Heart right ventricle (tissue), 16 donors: ENCODE measurements at regions of chr7 and their contacts with region 1.

Region 1: DNA sequence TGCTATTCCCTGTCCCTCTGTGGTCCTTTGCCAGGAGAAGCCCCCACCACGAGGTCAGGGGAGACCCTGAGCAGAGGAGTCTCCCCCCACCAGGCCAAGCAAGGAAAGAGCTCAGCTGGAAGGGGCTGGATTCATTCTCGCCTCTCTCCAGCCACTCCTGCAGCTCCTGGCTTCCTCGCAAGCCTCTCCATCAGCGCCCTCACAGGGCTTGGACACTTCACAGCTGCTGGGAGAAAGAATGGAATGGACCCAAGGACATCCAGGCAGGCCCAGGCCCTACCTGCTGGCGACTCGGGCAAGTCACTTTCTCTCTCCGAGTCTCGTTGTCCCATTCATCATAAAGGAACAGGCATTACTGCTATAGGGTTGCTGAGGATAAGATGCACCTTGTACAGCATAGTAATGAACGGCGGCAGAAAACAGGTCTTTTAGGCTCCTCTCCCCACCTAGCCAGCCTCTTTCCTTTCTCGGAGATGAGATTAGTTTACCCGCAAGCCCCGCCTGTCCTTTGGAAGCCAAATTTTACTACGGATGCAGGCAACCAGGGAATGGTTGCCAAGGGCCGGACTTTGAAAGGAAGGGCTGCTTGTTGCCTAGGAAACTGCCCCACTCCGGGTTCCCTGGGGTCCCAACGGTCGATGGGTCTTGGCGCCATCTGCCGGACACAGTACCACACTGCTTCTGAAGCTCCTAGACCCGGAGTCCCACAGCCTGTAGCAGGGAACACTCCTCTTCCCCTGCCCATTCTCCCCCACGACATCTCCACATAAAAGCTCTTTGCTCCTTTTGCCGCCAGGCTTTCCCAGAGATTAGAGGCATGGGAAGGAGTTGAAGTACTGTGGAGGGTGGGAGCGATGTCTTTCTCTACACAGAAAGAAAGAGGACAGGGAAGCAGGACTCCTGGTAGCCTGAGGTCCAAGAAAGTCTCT is 22.3 kb downstream of the IMPDH1 start:
- DNase-seq: peak; percentile 83 to 85
- ATAC-seq: peak; percentile 79 to 93 (median 87)
- H3K4me3 ChIP-seq: peak overlapping the region in 2 of 10 donors; percentile 16 to 20
- H3K27ac ChIP-seq: no peak overlapping the region
- H3K4me1 ChIP-seq: peaks cover 0 to 11% (median 5%) of the 10 kb centered on the region in 9 donors
- H3K27me3 ChIP-seq: peaks cover 0 to 7% (median 0%) of the 10 kb centered on the region in 7 donors
- CTCF ChIP-seq: peak; percentile 82 to 93 (median 88)

Region 2: DNA sequence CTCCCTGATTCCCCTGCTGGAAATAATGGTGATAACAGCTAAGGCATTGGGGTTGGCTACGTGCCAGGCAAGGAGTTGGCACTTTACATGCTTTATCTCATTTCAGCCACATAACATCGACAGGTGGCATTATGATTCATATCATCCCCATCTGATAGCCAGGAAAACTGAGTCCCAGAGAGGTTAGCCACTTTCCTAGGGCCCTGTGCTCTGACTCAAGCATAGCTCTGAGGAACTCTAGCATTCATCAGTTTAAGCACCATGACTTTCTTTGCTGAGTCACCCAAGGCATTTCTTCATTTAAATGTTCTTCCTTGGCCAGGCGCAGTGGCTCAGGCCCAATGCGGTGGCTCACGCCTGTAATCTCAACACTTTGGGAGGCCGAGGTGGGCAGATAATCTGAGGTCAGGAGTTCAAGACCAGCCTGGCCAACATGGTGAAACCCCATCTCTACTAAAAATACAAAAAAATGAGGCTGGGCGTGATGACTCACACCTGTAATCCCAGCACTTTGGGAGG is 139.7 kb before region 1 on chr7:
- intact Hi-C with region 1: no loop called
- DNase-seq: no peak
- ATAC-seq: peak in 1 of 8 donors; percentile 27
- H3K4me3 ChIP-seq: no peak overlapping the region
- H3K27ac ChIP-seq: no peak overlapping the region
- H3K4me1 ChIP-seq: no peaks in the 10 kb centered on the region
- H3K27me3 ChIP-seq: peaks cover 0 to 43% (median 14%) of the 10 kb centered on the region in 7 donors
- CTCF ChIP-seq: no peak

Region 3: GRCh38 chr7:128347647-128348097 is 39.8 kb before region 1 on chr7:
- intact Hi-C with region 1: loop called (anchors 1 to 5 kb)
- DNase-seq: peak; percentile 40 to 53
- ATAC-seq: peak in 2 of 8 donors; percentile 28 to 47
- H3K4me3 ChIP-seq: no peak overlapping the region
- H3K27ac ChIP-seq: no peak overlapping the region
- H3K4me1 ChIP-seq: peaks cover 3 to 23% (median 14%) of the 10 kb centered on the region in 9 donors
- H3K27me3 ChIP-seq: peaks cover 0 to 31% (median 19%) of the 10 kb centered on the region in 7 donors
- CTCF ChIP-seq: peak; percentile 40 to 77 (median 68)